ENCODE measurements at regions of chrX and their contacts with region 1.

Region 1: GRCh38 chrX:2962346-2962745 is 33.2 kb upstream of the ARSD start:
- DNase-seq: peak; percentile 3
- ATAC-seq: peak; percentile 77
- H3K4me3 ChIP-seq: peak overlapping the region; percentile 65 to 70 (median 70); a peak in 5 of 6 replicates
- H3K27ac ChIP-seq: peak overlapping the region; percentile 22
- H3K4me1 ChIP-seq: peaks cover 24% of the 10 kb centered on the region
- H3K27me3 ChIP-seq: no peaks in the 10 kb centered on the region
- CTCF ChIP-seq: no peak
- EP300 ChIP-seq: no peak
- POLR2A ChIP-seq: no peak
- RAD21 ChIP-seq: no peak

Region 2: DNA sequence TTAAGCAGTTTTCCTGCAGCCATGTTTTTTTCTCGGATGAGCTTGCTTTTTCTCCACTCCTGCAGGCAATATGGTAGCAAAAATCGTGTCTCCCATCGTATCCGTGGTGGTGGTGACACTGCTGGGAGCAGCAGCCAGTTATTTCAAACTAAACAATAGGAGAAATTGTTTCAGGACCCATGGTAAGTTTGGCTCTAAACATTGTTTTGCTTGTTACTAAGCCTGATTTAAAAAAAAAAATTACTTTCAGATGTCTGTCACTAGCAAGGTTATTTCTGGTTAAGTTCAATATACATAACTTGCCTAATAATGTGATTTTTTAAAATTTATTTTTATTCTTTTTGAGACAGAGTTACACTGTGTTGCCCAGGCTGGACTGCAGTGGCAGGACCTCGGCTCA is 151.1 kb before region 1 on chrX:
- CTCF ChIA-PET with region 1: no interaction called
- POLR2A ChIA-PET with region 1: no interaction called
- in situ Hi-C with region 1: no loop called
- intact Hi-C with region 1: no loop called
- DNase-seq: no peak
- ATAC-seq: no peak
- H3K4me3 ChIP-seq: no peak overlapping the region
- H3K27ac ChIP-seq: no peak overlapping the region
- H3K4me1 ChIP-seq: no peaks in the 10 kb centered on the region
- H3K27me3 ChIP-seq: no peaks in the 10 kb centered on the region
- CTCF ChIP-seq: no peak
- EP300 ChIP-seq: no peak
- POLR2A ChIP-seq: no peak
- RAD21 ChIP-seq: no peak

Region 3: DNA sequence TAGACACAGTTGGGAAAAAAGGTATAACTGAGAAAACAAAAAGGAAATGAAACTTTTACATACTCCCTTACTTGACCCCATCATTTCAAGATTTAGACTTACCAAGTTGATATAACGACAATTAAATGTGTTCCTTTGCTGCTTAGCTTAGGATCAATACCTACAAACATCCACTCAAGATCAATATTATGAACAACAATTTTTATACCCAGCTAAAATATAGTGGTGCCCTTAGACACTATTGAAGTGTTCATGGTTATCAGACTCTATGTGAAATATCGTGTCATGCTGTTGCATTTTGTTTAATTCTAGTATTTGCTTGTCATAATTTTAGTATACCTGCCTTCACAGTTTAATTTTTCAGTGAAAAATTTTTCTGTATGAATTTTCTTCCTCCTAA is 48.2 kb after region 1 on chrX:
- CTCF ChIA-PET with region 1: no interaction called
- POLR2A ChIA-PET with region 1: no interaction called
- in situ Hi-C with region 1: no loop called
- intact Hi-C with region 1: no loop called
- DNase-seq: no peak
- ATAC-seq: no peak
- H3K4me3 ChIP-seq: no peak overlapping the region
- H3K27ac ChIP-seq: no peak overlapping the region
- H3K4me1 ChIP-seq: peaks cover 10% of the 10 kb centered on the region
- H3K27me3 ChIP-seq: no peaks in the 10 kb centered on the region
- CTCF ChIP-seq: no peak
- EP300 ChIP-seq: no peak
- POLR2A ChIP-seq: no peak
- RAD21 ChIP-seq: no peak

Region 4: DNA sequence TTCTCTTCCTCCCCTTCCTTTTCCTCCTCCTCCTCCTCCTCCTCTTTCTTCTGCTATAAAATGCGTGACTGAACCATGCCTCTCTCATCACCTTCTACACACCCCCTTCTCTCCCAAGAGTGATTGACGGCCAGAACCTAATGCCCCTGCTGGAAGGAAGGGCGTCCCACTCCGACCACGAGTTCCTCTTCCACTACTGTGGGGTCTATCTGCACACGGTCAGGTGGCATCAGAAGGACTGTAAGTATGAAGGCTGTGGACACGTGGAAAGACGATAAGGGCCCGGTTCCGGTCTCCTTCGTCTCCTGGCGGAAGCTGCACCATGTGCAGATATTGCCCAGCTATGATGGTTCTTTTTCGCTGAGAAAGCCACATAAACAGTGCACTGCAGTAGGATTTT is 66.8 kb after region 1 on chrX:
- CTCF ChIA-PET with region 1: no interaction called
- POLR2A ChIA-PET with region 1: interaction called, 3 read pairs
- in situ Hi-C with region 1: no loop called
- intact Hi-C with region 1: loop called (anchors 2 kb)
- DNase-seq: no peak
- ATAC-seq: no peak
- H3K4me3 ChIP-seq: no peak overlapping the region
- H3K27ac ChIP-seq: no peak overlapping the region
- H3K4me1 ChIP-seq: no peaks in the 10 kb centered on the region
- H3K27me3 ChIP-seq: no peaks in the 10 kb centered on the region
- CTCF ChIP-seq: no peak
- EP300 ChIP-seq: no peak
- POLR2A ChIP-seq: no peak
- RAD21 ChIP-seq: no peak